ENCODE measurements at regions of chr17 and their contacts with region 1.

Region 1: DNA sequence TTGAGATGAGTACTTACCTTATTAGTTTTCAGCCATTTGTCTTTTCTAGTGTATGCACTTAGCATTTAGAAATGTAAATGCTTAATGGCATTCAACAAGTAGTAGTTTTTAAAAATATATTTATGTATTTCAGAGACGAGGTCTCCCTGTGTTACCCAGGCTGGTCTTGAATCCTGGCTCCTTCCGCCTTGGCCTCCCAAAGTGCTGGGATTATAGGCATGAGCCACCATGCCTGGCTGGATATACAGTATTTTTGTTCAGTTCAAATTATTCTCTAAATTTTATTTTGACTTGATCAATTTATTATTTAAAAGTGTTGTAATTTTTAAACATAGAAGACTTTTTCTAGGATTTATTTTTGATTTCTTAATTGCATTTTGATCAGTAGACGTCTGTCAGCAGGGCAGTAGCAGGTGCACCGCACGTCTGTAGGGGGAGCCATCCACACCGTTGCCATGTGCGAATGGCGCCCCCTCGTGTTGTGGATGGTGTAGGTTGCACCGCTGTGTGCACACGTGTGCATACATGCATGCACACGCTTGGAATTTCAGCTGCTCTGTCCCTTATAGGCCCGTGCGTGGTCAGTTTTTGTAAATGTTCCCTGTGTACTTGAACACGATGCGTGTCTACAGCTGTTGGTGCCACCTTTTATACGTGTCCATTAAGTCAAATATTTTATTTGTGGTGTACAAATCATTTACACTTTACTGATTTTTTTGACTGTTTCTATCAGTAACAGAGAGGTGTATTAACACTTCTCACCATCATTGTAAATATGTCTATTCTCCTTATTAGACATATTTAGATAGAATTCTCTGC is 30.6 kb downstream of the RPTOR start:
- DNase-seq: peak; percentile 93
- CTCF ChIP-seq: peak; percentile 100

Region 2: GRCh38 chr17:80970044-80970761 is 394.9 kb after region 1 on chr17:
- in situ Hi-C with region 1: loop called (anchors 10 kb)
- DNase-seq: peak; percentile 88
- CTCF ChIP-seq: peak; percentile 50